ENCODE measurements at regions of chrX and their contacts with region 1.

Region 1: GRCh38 chrX:14528629-14529289 is 577 bp upstream of the GLRA2 start:
- DNase-seq: peak; percentile 76
- H3K4me3 ChIP-seq: no peak overlapping the region
- H3K27ac ChIP-seq: no peak overlapping the region
- H3K4me1 ChIP-seq: no peaks in the 10 kb centered on the region
- H3K27me3 ChIP-seq: peaks cover 11% of the 10 kb centered on the region
- CTCF ChIP-seq: peak; percentile 72

Region 2: GRCh38 chrX:14051416-14051815 is 477.3 kb before region 1 on chrX:
- CTCF ChIA-PET with region 1: no interaction called
- POLR2A ChIA-PET with region 1: no interaction called
- intact Hi-C with region 1: loop called (anchors 5 kb)
- DNase-seq: no peak
- H3K4me3 ChIP-seq: no peak overlapping the region
- H3K27ac ChIP-seq: no peak overlapping the region
- H3K4me1 ChIP-seq: no peaks in the 10 kb centered on the region
- H3K27me3 ChIP-seq: peaks cover 1% of the 10 kb centered on the region
- CTCF ChIP-seq: 0 out of 2 replicates have a peak, but pooled peaks have one; percentile 25

Region 3: GRCh38 chrX:14095702-14096101 is 433.1 kb before region 1 on chrX:
- CTCF ChIA-PET with region 1: no interaction called
- POLR2A ChIA-PET with region 1: no interaction called
- intact Hi-C with region 1: loop called (anchors 1 kb)
- DNase-seq: peak; percentile 73
- H3K4me3 ChIP-seq: no peak overlapping the region
- H3K27ac ChIP-seq: no peak overlapping the region
- H3K4me1 ChIP-seq: no peaks in the 10 kb centered on the region
- H3K27me3 ChIP-seq: peaks cover 11% of the 10 kb centered on the region
- CTCF ChIP-seq: peak; percentile 86